Posterior cingulate gyrus (tissue), 11 donors: ENCODE measurements at regions of chr11 and their contacts with region 1.

Region 1: GRCh38 chr11:5380740-5381342 is 2.8 kb upstream of the OR51M1 start:
- DNase-seq: peak in 7 of 10 donors; percentile 23 to 90 (median 42)

Region 2: GRCh38 chr11:4643076-4643475 is 737.8 kb before region 1 on chr11:
- intact Hi-C with region 1: loop called (anchors 10 kb)
- DNase-seq: no peak

Region 3: DNA sequence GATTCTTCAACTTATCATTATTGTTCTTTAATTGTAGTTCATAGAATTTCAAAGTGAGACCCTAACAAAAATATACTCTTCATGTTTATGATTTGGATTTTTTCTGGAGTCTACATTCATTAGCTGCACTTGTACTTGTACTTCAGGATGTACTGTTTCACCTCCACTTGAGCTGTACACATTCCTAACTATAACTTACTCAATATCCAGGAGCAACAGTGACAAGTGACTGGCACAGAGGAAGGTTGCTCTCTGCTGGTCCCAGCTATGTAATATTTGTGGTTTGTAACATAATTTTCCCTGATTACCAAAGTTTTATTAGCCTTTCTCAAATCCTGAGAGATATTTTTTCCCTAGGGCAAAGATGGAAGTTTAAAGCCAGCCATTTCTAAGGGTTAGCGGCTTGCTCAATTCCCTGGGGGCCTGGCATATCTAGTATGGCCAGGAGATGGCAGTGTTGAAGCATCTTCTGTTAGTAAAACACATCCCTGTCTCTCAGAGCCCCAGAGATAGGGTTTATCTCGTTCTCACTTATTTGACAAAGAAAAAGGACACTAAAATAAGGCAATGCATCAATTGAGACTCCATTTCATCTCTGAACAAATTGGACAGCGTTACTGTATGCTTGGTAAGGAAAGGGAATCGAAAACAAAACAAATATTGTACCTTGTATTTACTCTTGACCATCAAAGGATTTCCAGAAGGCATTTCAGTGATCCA is 256.9 kb before region 1 on chr11:
- intact Hi-C with region 1: loop called (anchors 1 kb)
- DNase-seq: peak in 9 of 10 donors; percentile 51 to 89 (median 70)

Region 4: DNA sequence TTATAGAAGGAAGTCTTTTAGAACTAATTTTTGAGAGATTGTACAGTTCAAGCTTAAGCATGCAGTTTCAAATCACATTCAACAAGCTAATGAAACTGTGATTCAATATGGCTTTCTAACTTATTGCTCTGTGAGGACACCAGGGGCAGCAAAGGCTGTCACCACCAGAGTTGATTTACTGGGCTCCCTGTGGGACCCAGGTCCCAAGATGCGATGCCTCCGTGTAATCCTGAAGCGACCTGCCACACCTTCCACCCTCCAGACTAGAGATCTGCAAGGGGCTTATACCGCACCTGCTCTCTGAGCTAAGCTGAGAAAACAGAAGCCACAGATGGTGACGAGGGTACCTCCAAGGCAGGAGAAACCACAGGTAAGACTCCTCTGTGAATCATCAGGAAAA is 40.2 kb after region 1 on chr11:
- intact Hi-C with region 1: no loop called
- DNase-seq: no peak

Region 5: DNA sequence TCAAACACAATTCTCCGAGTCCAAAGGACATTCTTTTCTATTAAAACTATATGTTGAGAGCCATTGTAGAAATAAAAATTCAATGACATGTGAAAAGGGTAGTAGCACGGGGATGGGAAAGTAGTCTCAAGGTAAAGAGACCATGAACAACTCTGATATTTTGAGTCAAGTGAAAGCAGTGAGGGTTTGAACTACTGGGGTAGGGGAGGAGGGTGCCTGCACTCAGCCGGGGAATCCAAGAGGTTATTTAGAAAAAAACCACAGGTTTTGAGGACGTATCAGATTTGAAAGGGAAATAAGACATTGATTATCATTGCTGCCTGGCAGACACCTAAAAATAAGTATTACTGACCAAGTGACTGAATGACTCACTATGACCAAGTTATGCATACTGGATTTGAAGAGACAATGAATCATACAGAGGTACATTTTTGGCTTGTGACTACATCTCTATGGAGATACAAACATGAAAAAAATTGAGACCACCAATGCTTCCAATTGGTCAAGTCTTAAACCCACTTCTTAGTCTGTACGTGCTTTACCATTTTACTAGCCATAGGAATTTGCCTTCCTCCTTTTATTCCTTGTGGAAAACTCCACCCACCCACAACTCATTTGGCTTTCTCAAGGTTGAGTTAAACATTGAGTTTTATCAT is 169.7 kb after region 1 on chr11:
- intact Hi-C with region 1: no loop called
- DNase-seq: no peak